Gastrocnemius medialis (tissue), 4 donors: ENCODE measurements at regions of chr15 and their contacts with region 1.

Region 1: DNA sequence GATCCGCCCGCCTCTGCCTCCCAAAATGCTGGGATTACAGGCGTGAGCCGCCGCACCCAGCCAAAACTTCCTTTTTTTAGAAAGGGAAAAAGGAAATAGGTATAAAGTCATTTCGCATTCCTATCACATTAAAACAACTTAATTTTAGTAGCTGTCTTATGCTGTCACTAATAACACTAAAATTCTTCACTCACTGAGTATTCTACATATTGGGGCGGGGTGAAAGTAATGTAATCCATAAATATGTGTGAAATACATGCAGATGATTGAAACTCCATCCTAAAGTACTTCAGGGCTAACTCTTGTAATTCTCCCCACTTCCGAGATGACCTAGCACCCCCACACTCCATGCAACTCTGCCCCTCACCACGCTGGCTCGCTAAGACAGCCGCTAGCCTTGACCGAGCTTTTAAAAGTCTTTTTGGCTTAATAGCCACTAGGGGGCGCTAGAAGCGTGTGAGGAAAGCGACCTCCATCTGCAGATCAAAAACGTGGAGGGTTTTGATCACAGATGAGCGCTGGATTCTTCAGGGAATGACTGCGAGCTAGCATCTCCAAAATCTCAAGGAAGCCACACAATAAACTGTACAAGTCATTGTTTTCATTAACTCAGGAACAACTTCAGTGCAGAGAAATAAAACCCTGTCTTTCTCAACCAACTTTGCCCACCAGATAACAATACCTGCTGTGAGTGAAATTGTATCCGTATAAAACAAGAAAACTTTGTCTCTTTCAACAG is 129.3 kb upstream of the IGF1R start:
- DNase-seq: no peak
- ATAC-seq: peak; percentile 68 to 82
- H3K4me3 ChIP-seq: no peak overlapping the region
- H3K27ac ChIP-seq: no peak overlapping the region
- H3K4me1 ChIP-seq: no peaks in the 10 kb centered on the region
- H3K27me3 ChIP-seq: no peaks in the 10 kb centered on the region
- CTCF ChIP-seq: peak; percentile 67 to 90 (median 79)
- POLR2A ChIP-seq: no peak

Region 2: GRCh38 chr15:98647774-98648653 is 129.0 kb after region 1 on chr15 and contains the start of gene IGF1R:
- in situ Hi-C with region 1: loop called in 2 of 4 experiments (anchors 5 to 10 kb)
- intact Hi-C with region 1: no loop called
- DNase-seq: peak; percentile 62 to 72
- ATAC-seq: peak; percentile 83 to 84
- H3K4me3 ChIP-seq: peak within 1 kb of the TSS; percentile 80 to 97 (median 88)
- H3K27ac ChIP-seq: peak within 1 kb of the TSS; percentile 86 to 92 (median 90)
- H3K4me1 ChIP-seq: peaks cover 0 to 7% of the 10 kb centered on the region in 2 donors
- H3K27me3 ChIP-seq: peaks cover 12 to 34% (median 28%) of the 10 kb centered on the region in 3 donors
- CTCF ChIP-seq: peak in 4 of 5 experiments; percentile 17 to 49 (median 25)
- POLR2A ChIP-seq: peak; percentile 70 to 85
- total RNA-seq, gene IGF1R: 10.1 to 50.4 (median 12.3) TPM

Region 3: GRCh38 chr15:98658831-98659699 is 140.1 kb after region 1 on chr15:
- in situ Hi-C with region 1: loop called in 2 of 4 experiments (anchors 5 to 10 kb)
- intact Hi-C with region 1: loop called (anchors 1 kb)
- DNase-seq: peak; percentile 20
- ATAC-seq: peak; percentile 89 to 92
- H3K4me3 ChIP-seq: peak overlapping the region in 1 of 4 donors; percentile 33
- H3K27ac ChIP-seq: peak overlapping the region in 1 of 4 donors; percentile 36
- H3K4me1 ChIP-seq: peaks cover 32 to 59% of the 10 kb centered on the region in 2 donors
- H3K27me3 ChIP-seq: no peaks in the 10 kb centered on the region
- CTCF ChIP-seq: peak; percentile 41 to 86 (median 69)
- POLR2A ChIP-seq: no peak

Region 4: DNA sequence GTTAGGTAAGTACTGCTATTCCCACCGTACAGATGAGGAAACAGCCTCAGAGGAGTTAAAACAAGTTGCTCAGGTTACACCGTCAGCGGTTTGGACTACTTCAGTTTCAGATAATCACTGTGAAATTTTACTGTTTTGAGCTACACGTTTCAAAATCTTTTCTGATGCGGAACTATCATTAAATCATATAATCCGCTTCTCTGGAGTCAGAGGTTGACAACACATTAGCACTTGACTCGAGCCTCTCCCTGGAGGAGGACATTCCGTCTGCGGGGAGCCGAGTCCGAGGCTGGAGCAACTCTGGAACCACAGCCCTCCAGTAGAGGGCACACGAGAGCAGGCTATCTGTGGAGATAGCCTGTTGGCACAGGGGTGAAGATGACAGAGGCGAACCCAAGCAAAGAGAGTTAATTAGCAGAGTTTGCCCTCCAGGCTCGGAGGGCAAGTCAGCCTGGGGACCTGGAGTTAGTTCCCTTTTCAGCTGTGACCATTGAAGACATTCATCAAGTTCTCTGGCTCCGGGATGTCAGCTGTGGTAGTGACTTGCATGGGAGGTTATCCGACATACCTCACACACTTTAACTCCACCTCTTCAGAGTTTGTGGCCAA is 260.6 kb after region 1 on chr15:
- in situ Hi-C with region 1: loop called in 1 of 4 experiments (anchors 25 kb)
- intact Hi-C with region 1: no loop called
- DNase-seq: peak; percentile 60 to 73
- ATAC-seq: peak; percentile 97 to 99
- H3K4me3 ChIP-seq: peak overlapping the region in 1 of 4 donors; percentile 27
- H3K27ac ChIP-seq: no peak overlapping the region
- H3K4me1 ChIP-seq: peaks cover 8 to 11% of the 10 kb centered on the region in 2 donors
- H3K27me3 ChIP-seq: no peaks in the 10 kb centered on the region
- CTCF ChIP-seq: peak; percentile 77 to 96 (median 87)
- POLR2A ChIP-seq: no peak

Region 5: GRCh38 chr15:98881526-98882520 is 362.8 kb after region 1 on chr15:
- in situ Hi-C with region 1: loop called in 2 of 4 experiments (anchors 25 kb)
- intact Hi-C with region 1: no loop called
- DNase-seq: peak in 1 of 2 donors; percentile 33
- ATAC-seq: peak in 1 of 2 donors; percentile 57
- H3K4me3 ChIP-seq: no peak overlapping the region
- H3K27ac ChIP-seq: no peak overlapping the region
- H3K4me1 ChIP-seq: peaks cover 9 to 25% of the 10 kb centered on the region in 2 donors
- H3K27me3 ChIP-seq: no peaks in the 10 kb centered on the region
- CTCF ChIP-seq: peak; percentile 41 to 56 (median 47)
- POLR2A ChIP-seq: no peak

Region 6: DNA sequence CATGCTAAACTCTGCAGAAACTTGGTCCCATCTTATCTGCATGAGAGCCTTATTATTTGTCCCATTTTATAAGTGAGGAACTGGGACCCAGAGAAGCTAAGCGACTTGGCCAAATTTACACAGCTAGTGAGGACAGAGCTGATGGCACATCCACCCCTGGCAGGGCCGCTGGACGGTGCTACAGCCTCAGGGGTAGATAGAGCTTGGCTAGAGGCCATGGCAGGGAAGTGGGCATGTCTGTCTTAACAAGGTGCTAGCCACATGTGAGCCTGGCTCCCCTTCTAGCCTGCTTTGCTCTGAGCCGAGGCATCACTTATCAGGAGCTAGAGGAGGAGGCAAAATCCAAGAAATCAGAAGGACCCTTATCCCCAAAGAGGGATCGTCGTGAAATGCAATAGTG is 549.2 kb after region 1 on chr15:
- in situ Hi-C with region 1: loop called in 1 of 4 experiments (anchors 5 kb)
- intact Hi-C with region 1: no loop called
- DNase-seq: no peak
- ATAC-seq: no peak
- H3K4me3 ChIP-seq: no peak overlapping the region
- H3K27ac ChIP-seq: no peak overlapping the region
- H3K4me1 ChIP-seq: no peaks in the 10 kb centered on the region
- H3K27me3 ChIP-seq: no peaks in the 10 kb centered on the region
- CTCF ChIP-seq: no peak
- POLR2A ChIP-seq: no peak

Region 7: DNA sequence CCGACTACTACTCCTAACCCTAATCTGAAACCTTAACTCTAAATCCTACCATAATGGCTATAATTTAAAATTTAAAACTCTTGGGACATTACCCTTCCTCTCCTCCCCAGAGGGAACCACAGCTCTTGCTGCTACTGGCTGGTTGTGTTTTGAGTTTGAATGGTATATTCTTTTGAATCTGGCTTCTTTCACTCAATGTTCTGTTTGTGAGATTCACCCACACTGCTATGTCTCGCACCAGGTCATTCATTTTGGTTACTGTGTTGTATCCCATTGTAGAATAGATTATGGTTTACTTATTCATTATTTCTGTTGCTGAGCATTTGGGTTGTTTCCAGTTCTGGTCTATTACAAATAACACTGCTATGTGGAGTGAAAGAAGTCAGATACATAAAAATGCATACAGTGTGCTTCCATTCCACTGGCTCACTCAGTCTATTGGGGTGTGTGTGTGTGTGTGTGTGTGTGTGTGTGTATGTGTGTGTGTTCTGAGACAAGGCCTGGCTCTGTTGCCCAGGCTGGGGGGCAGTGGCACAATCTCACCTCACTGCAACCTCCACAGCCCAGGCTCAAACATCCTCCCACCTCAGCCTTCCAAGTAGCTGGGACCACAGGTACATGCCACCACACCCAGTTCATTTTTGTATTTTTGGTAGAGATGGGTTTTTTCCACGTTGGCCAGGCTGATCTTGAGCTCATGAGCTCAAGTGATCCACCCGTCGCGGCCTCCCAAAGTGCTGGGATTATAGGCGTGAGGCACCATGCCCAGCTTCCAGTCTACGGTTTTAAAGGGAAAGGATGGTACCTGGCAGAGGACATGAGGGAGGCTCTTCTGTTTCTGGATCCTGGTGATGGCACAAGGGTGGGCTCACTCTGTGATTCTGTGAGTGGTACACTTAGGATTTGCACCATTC is 566.7 kb after region 1 on chr15:
- in situ Hi-C with region 1: loop called in 1 of 4 experiments (anchors 10 kb)
- intact Hi-C with region 1: no loop called
- DNase-seq: no peak
- ATAC-seq: peak; percentile 18 to 53
- H3K4me3 ChIP-seq: no peak overlapping the region
- H3K27ac ChIP-seq: peak overlapping the region in 3 of 4 donors; percentile 8 to 51 (median 49)
- H3K4me1 ChIP-seq: peaks cover 12 to 13% of the 10 kb centered on the region in 2 donors
- H3K27me3 ChIP-seq: no peaks in the 10 kb centered on the region
- CTCF ChIP-seq: no peak
- POLR2A ChIP-seq: no peak